ENCODE measurements at regions of chr16 and their contacts with region 1.

Region 1: DNA sequence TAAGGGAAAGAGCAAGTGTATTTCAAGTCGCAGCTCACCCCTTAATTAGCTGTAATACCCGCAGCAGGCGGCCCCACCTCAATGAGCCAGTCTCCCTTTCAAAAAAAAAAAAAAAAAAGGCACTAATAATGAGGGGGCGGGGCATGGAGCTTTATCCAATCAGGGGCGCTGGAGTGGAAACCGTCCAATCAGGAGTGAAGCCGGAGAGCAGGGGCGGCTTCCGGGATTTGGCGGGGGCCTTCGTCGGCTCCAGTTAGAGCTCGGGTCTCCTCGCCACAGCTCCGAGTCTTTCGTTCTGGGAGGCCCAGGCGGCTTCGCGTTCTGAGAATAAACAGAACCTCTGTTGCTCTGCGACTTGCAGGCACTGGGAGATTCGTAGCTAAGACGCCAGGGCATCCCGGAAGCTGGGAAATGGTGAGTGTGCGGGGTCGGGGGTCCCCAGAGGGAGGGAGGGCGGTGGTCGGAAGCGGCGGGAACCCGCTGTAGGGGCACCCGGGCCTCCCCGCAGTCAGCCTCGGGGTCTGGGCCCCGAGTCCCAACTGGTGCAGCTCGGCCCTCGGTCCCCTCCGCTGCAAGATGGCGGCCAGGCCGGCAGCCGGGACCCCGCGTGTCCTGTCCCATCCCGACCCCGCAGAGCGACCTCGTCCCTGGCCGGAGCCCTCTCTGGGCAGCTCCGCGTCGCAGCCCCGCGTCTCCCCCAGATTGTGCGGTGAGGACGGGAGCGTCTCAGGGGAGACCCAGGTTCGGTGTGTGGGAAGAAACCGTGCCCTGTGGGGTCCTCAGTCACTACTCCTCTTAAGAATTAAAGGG is at the start of gene ZNF267:
- DNase-seq: peak; percentile 40
- H3K4me3 ChIP-seq: peak within 1 kb of the TSS; percentile 97
- CTCF ChIP-seq: no peak

Region 2: GRCh38 chr16:31861455-31861854 is 12.3 kb before region 1 on chr16:
- CTCF ChIA-PET with region 1: interaction called, 56 read pairs
- POLR2A ChIA-PET with region 1: interaction called, 3 read pairs
- DNase-seq: no peak
- H3K4me3 ChIP-seq: no peak overlapping the region
- CTCF ChIP-seq: no peak

Measured in AG04449 (cell line).